Common myeloid progenitor, CD34-positive (primary cell): ENCODE measurements at regions of chr5 and their contacts with region 1.

Region 1: GRCh38 chr5:134758504-134759341 is at the start of gene DDX46:
- DNase-seq: peak; percentile 91 to 94 (median 93)
- H3K4me3 ChIP-seq: peak within 1 kb of the TSS; percentile 80 to 99 (median 90)
- H3K27ac ChIP-seq: peak within 1 kb of the TSS; percentile 64 to 81
- H3K4me1 ChIP-seq: peaks cover 6 to 22% (median 14%) of the 10 kb centered on the region in 4 experiments
- H3K27me3 ChIP-seq: no peaks in the 10 kb centered on the region

Region 2: GRCh38 chr5:134568761-134569695 is 189.7 kb before region 1 on chr5:
- CTCF ChIA-PET with region 1: no interaction called
- POLR2A ChIA-PET with region 1: no interaction called
- DNase-seq: no peak
- H3K4me3 ChIP-seq: no peak overlapping the region
- H3K27ac ChIP-seq: no peak overlapping the region
- H3K4me1 ChIP-seq: no peaks in the 10 kb centered on the region
- H3K27me3 ChIP-seq: no peaks in the 10 kb centered on the region

Region 3: GRCh38 chr5:134648425-134649162 is 110.1 kb before region 1 on chr5 and contains the start of gene SEC24A:
- CTCF ChIA-PET with region 1: no interaction called
- POLR2A ChIA-PET with region 1: no interaction called
- DNase-seq: peak; percentile 93 to 96 (median 96)
- H3K4me3 ChIP-seq: peak within 1 kb of the TSS; percentile 60 to 99 (median 94)
- H3K27ac ChIP-seq: peak within 1 kb of the TSS; percentile 98
- H3K4me1 ChIP-seq: peaks cover 6 to 26% (median 15%) of the 10 kb centered on the region in 4 experiments
- H3K27me3 ChIP-seq: no peaks in the 10 kb centered on the region

Region 4: GRCh38 chr5:134738133-134738962 is 20.4 kb before region 1 on chr5 and contains the start of gene CAMLG:
- CTCF ChIA-PET with region 1: interaction called, 52 read pairs
- POLR2A ChIA-PET with region 1: interaction called, 6 read pairs
- DNase-seq: peak; percentile 99
- H3K4me3 ChIP-seq: peak within 1 kb of the TSS; percentile 86 to 99 (median 90)
- H3K27ac ChIP-seq: peak within 1 kb of the TSS; percentile 77 to 90
- H3K4me1 ChIP-seq: peaks cover 9 to 45% (median 34%) of the 10 kb centered on the region in 4 experiments
- H3K27me3 ChIP-seq: no peaks in the 10 kb centered on the region

Region 5: DNA sequence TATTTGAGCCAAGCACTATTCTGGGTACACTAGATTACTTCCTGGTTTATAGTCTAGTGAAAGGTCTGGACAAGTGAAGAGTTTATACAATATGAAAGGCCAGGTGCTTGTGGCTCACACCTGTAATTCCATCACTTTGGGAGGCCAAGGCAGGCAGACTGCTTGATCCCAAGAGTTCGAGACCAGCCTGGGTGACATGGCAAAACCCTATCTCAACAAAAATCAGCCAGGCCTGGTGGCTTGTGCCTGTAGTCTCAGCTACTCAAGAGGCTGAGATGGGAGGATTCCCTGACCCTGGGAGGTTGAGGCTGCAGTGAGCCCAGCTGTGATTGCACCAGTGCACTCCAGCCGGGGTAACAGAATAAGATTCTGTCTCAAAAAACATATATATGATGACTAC is 106.0 kb after region 1 on chr5:
- CTCF ChIA-PET with region 1: no interaction called
- POLR2A ChIA-PET with region 1: no interaction called
- DNase-seq: no peak
- H3K4me3 ChIP-seq: no peak overlapping the region
- H3K27ac ChIP-seq: no peak overlapping the region
- H3K4me1 ChIP-seq: no peaks in the 10 kb centered on the region
- H3K27me3 ChIP-seq: no peaks in the 10 kb centered on the region